ENCODE measurements at regions of chr2 and their contacts with region 1.

Region 1: DNA sequence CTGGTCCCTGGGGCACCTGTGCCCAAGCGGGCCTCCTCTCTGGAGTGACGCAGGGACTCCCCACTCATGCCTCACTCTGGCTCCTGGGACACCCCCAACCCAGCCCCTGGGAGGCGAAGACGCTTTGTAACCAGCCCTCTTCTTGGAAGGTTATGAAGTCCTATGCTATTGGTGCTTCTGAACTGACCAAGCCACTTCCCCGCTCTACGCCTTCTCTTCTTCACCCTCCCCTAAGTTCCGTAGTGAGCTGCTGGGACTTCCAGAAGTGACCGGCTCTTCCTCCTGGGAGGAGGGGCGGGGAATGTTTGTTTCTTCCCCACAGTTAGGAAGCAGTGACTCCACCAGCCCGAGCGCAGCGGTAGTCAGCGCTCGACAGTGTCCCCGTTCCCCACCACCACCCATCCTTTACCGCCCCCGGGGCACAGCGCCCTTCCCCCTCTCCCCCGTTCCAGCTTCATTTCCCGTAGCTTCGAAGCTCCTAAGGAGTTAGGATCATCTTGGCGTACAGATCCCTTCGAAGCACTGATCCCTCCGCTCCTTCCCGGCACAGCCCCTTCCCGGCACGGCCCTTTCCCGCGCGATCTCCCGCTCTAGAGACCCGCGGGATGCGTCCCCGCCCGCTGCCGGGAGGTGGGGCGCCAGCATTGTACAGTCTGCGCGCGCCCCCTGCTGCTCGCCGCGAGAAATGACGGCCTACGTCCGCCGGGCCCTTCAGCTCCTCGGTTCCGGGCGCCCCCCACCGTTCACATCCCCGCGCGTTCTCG is 25.3 kb upstream of the NOTO start:
- DNase-seq: peak; percentile 92
- ATAC-seq: peak; percentile 72
- H3K4me3 Mint-ChIP-seq: peak overlapping the region; percentile 86
- H3K27ac Mint-ChIP-seq: no peak overlapping the region
- H3K4me1 Mint-ChIP-seq: peaks cover 22% of the 10 kb centered on the region
- H3K27me3 Mint-ChIP-seq: peaks cover 95% of the 10 kb centered on the region
- CTCF ChIP-seq: peak; percentile 83

Region 2: DNA sequence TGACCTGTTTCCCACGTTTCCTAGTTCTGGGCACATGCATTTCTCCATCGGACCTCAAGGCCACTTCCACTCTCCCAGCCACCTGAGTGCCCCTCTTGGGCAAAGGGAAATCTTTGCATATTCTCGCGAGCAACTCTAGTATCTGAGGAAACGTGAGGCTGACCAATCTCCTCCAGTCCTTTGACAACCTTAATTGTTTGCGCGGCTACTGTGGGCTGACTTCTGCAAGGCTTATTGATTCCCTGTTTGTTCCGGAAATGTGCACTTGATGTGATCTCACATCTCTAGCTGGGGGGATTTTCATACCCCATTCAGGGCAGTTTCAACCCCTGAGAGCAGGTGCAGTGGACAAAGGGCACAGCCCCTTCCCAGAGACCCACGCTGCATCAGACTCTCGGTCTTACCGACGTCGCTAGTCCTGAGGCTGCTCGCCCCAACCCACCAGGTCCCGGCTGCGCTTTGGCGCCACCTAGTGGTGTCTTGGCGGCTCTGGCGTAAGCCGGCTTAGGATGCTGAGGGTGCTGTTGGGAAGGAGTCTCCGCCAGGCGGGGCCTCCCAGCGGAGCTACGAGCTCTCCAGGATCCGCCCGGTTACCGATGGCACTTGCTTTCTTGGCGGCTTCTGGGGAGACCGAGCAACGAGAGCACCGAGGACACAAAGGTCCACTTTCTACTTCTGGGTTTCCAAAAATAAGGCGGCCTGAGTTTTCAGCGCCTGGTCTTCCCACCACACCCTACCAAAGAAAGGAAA is 314.6 kb before region 1 on chr2:
- CTCF ChIA-PET with region 1: interaction called, 18 read pairs
- POLR2A ChIA-PET with region 1: no interaction called
- DNase-seq: peak; percentile 96
- ATAC-seq: peak; percentile 92
- H3K4me3 Mint-ChIP-seq: peak overlapping the region; percentile 73
- H3K27ac Mint-ChIP-seq: no peak overlapping the region
- H3K4me1 Mint-ChIP-seq: peaks cover 20% of the 10 kb centered on the region
- H3K27me3 Mint-ChIP-seq: peaks cover 16% of the 10 kb centered on the region
- CTCF ChIP-seq: peak; percentile 98

Region 3: GRCh38 chr2:72963423-72964145 is 213.5 kb before region 1 on chr2:
- CTCF ChIA-PET with region 1: interaction called, 12 read pairs
- POLR2A ChIA-PET with region 1: no interaction called
- DNase-seq: peak; percentile 73
- ATAC-seq: peak; percentile 84
- H3K4me3 Mint-ChIP-seq: no peak overlapping the region
- H3K27ac Mint-ChIP-seq: peak overlapping the region; percentile 98
- H3K4me1 Mint-ChIP-seq: peaks cover 53% of the 10 kb centered on the region
- H3K27me3 Mint-ChIP-seq: peaks cover 7% of the 10 kb centered on the region
- CTCF ChIP-seq: no peak

Region 4: GRCh38 chr2:73035899-73036711 is 141.0 kb before region 1 on chr2:
- CTCF ChIA-PET with region 1: interaction called, 20 read pairs
- POLR2A ChIA-PET with region 1: interaction called, 12 read pairs
- DNase-seq: peak; percentile 53
- ATAC-seq: peak; percentile 97
- H3K4me3 Mint-ChIP-seq: no peak overlapping the region
- H3K27ac Mint-ChIP-seq: no peak overlapping the region
- H3K4me1 Mint-ChIP-seq: peaks cover 19% of the 10 kb centered on the region
- H3K27me3 Mint-ChIP-seq: no peaks in the 10 kb centered on the region
- CTCF ChIP-seq: no peak

Region 5: DNA sequence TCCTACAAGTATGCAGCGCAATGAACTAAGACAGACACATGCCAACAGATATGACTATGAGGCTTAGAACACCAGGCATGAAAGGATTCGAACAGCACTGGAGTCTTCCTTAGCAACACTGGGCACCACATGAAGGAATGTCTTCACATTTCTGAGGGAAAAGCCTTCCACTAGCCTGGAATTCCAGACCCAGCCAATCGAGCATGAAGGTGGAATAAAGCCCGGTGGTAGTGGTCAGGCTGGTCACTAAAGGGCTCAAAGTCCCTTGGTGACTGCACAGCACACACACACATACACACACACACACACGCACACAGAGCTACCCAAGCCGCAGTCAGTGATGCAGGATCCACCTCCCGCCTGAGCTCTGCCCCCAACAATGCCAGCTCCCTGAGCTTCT is 85.9 kb before region 1 on chr2:
- CTCF ChIA-PET with region 1: interaction called, 88 read pairs
- POLR2A ChIA-PET with region 1: no interaction called
- DNase-seq: no peak
- ATAC-seq: no peak
- H3K4me3 Mint-ChIP-seq: no peak overlapping the region
- H3K27ac Mint-ChIP-seq: no peak overlapping the region
- H3K4me1 Mint-ChIP-seq: no peaks in the 10 kb centered on the region
- H3K27me3 Mint-ChIP-seq: no peaks in the 10 kb centered on the region
- CTCF ChIP-seq: no peak

Region 6: DNA sequence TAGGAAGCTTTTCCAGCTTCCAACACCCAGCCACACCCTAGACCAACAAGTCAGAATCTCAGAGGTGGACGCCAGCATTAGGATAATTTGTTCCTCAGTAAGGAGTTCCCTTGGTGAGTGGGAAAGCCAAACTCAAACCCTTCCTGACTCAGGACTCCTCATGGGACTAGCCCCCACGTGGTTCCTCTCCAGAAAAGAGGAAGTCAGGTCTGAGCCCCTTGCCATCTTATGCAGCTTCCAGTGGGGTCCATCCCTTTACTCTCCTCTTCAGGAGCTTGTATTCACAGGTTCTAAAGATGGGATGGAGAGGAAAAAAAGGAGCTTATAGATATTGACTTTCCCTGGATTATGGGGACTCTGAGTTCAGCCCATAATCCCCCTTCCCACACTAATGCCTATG is 10.5 kb after region 1 on chr2:
- CTCF ChIA-PET with region 1: interaction called, 27 read pairs
- POLR2A ChIA-PET with region 1: no interaction called
- DNase-seq: no peak
- ATAC-seq: no peak
- H3K4me3 Mint-ChIP-seq: no peak overlapping the region
- H3K27ac Mint-ChIP-seq: no peak overlapping the region
- H3K4me1 Mint-ChIP-seq: peaks cover 12% of the 10 kb centered on the region
- H3K27me3 Mint-ChIP-seq: peaks cover 72% of the 10 kb centered on the region
- CTCF ChIP-seq: no peak

Region 7: GRCh38 chr2:73243884-73244570 is 67.0 kb after region 1 on chr2:
- CTCF ChIA-PET with region 1: no interaction called
- POLR2A ChIA-PET with region 1: no interaction called
- DNase-seq: no peak
- ATAC-seq: no peak
- H3K4me3 Mint-ChIP-seq: no peak overlapping the region
- H3K27ac Mint-ChIP-seq: no peak overlapping the region
- H3K4me1 Mint-ChIP-seq: no peaks in the 10 kb centered on the region
- H3K27me3 Mint-ChIP-seq: no peaks in the 10 kb centered on the region
- CTCF ChIP-seq: no peak

Measured in WTC11 (cell line).